ENCODE measurements at regions of chr7 and their contacts with region 1.

Region 1: DNA sequence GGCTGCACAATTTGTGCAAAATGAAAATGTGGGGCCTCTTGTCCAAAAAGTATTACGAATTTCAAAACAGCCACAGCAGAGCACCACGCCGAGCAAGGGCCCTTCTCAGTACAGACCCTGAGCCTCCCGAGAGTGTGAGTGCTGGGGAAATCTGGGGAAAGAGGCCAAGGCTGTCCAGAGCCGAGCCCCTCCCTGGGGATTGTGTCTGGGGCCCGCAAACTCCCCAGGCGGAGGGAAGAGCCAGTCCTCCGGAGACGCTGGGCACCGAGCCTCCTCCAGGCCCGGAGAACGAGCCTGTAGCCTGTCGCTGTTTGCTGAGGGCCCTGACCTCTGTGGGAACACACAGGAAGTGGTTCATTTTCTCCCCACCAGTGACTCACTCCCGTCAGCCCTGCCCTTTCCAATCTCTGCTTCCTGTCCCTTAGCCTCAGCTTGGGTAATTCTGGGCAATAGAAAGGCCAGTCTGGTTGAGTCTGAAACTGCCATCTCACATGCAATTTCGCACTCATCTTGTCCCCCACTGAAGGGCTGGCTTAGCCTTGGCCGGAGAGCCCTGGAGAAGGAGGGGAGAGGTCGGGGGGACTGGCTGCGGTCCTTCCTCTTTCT is 19.5 kb upstream of the GNA12 start:
- DNase-seq: peak; percentile 89
- H3K4me3 ChIP-seq: peak overlapping the region; percentile 25; the same call in 1 of the 2 replicates
- CTCF ChIP-seq: no peak

Region 2: GRCh38 chr7:2844165-2844898 is 19.2 kb before region 1 on chr7 and contains the start of gene GNA12:
- CTCF ChIA-PET with region 1: interaction called, 24 read pairs
- POLR2A ChIA-PET with region 1: no interaction called
- DNase-seq: peak; percentile 82
- H3K4me3 ChIP-seq: peak within 1 kb of the TSS; percentile 78
- CTCF ChIP-seq: no peak

Region 3: DNA sequence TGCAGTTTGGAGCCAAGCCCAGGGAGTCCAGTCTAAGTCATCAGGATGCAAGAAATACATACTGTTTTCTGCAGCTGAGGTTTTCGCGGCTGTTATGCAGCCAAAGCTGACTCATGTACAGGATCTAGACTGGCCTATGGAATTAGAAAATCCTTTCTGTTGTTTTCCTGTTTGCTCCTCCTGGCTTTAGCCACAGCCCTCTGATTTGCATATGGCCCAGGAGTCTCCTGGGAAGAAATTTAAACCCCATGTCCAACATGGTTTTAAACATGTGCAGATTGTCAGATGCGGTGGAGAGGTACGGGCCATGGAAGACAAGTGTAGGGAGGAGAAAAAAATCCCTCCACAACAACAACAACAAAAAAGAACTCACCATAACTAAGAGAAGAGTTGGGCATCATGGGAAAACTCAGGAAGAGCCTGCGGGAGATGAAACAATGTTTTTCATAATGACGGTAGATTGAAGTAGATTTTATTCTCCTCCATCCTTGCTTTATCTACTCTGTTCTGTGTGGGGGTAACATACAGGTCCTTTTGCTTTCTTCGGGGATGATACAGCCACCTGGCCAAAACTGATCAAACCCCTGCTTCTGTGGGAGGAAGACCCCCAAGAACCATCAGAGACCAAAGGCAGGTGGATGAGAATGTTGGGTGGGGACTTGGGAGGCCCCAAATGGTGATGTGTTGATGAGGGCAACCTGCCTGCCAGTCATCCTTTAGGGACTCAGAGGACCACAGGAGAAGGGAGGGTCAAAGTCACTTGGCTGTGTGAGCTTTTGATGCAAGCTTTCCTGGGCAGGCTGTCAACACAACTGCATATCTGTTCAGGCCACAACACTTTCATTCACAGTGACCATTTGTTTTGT is 10.4 kb after region 1 on chr7:
- CTCF ChIA-PET with region 1: interaction called, 34 read pairs
- POLR2A ChIA-PET with region 1: interaction called, 3 read pairs
- DNase-seq: peak; percentile 59
- H3K4me3 ChIP-seq: no peak overlapping the region
- CTCF ChIP-seq: no peak

Region 4: GRCh38 chr7:3154912-3155494 is 291.4 kb after region 1 on chr7:
- CTCF ChIA-PET with region 1: interaction called, 55 read pairs
- POLR2A ChIA-PET with region 1: no interaction called
- DNase-seq: no peak
- H3K4me3 ChIP-seq: no peak overlapping the region
- CTCF ChIP-seq: peak; percentile 46

Region 5: GRCh38 chr7:3174515-3175284 is 311.1 kb after region 1 on chr7:
- CTCF ChIA-PET with region 1: no interaction called
- POLR2A ChIA-PET with region 1: no interaction called
- DNase-seq: no peak
- H3K4me3 ChIP-seq: no peak overlapping the region
- CTCF ChIP-seq: no peak